Right cardiac atrium (tissue), 5 donors: ENCODE measurements at regions of chr14 and their contacts with region 1.

Region 1: DNA sequence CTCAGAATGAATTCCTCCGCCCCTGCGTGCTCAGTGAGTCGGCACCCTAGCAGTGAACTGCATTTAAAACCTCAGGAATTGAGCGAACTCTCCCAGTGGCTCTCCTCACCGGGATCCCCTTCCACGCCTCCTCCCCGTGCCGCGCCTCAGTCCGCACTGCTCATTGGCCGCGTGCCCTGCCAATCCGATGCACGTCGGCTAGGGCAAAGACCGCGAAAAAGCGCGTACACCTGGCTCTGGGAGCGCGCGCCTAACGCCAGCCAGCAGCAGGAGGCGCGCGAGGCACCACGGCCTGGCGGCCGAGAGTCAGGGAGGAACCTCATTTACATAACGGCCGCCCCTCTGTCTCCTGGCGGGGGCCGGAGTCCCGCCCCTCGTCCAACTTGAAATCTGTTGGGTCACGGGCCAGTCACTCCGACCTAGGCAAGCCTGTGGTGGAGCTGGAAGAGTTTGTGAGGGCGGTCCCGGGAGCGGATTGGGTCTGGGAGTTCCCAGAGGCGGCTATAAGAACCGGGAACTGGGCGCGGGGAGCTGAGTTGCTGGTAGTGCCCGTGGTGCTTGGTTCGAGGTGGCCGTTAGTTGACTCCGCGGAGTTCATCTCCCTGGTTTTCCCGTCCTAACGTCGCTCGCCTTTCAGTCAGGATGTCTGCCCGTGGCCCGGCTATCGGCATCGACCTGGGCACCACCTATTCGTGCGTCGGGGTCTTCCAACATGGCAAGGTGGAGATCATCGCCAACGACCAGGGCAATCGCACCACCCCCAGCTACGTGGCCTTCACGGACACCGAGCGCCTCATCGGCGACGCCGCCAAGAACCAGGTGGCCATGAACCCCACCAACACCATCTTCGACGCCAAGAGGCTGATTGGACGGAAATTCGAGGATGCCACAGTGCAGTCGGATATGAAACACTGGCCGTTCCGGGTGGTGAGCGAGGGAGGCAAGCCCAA is at the start of gene HSPA2:
- DNase-seq: peak; percentile 99 to 100 (median 99)
- ATAC-seq: peak; percentile 98
- H3K4me3 ChIP-seq: peak within 1 kb of the TSS; percentile 62
- H3K27ac ChIP-seq: no peak within 1 kb of the TSS
- H3K4me1 ChIP-seq: no peaks in the 10 kb centered on the region
- H3K27me3 ChIP-seq: no peaks in the 10 kb centered on the region
- total RNA-seq, gene HSPA2: 41.6 to 113 (median 56.9) TPM

Region 2: GRCh38 chr14:64636208-64636979 is 95.9 kb after region 1 on chr14:
- intact Hi-C with region 1: loop called (anchors 2 to 10 kb)
- DNase-seq: peak; percentile 58 to 84 (median 83)
- ATAC-seq: peak; percentile 89 to 90
- H3K4me3 ChIP-seq: no peak overlapping the region
- H3K27ac ChIP-seq: no peak overlapping the region
- H3K4me1 ChIP-seq: no peaks in the 10 kb centered on the region
- H3K27me3 ChIP-seq: no peaks in the 10 kb centered on the region